CD4-positive, alpha-beta memory T cell (primary cell): ENCODE measurements at regions of chr12 and their contacts with region 1.

Region 1: DNA sequence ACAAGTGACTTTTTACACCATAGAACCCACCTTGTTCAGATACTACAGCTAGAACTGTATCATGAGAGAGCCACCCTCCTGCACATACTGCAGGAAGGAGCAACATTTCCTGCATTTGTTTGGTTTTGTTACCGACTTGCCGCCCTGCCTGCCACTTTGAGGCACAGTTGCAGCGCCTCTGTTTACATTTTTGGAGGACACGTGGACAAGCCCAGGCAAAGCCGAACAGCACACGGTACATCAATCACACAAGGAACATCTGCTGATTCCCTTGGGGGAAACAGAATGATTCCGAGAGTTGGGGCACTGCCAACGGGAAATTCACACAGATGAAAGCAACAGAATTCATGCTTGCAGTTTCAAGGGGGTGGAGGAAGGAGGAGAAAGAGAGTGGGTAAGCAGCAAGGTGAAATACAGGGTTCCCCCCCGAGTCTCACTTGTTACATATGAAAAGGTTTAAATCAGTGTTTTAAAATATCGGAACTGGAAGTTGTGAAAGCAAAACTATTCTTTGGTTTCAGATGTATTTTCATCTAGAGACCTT is 110.7 kb downstream of the BTG1 start:
- DNase-seq: peak; percentile 55 to 62 (median 59)
- H3K4me3 ChIP-seq: peak overlapping the region; percentile 24 to 44
- H3K4me3 Mint-ChIP-seq: peak overlapping the region; percentile 83 to 97 (median 91)
- H3K27ac ChIP-seq: peak overlapping the region; percentile 65
- H3K27ac Mint-ChIP-seq: peak overlapping the region; percentile 97 to 100 (median 98)
- H3K4me1 ChIP-seq: peaks cover 92% of the 10 kb centered on the region
- H3K4me1 Mint-ChIP-seq: peaks cover 66 to 97% (median 81%) of the 10 kb centered on the region in 4 donors
- H3K27me3 ChIP-seq: no peaks in the 10 kb centered on the region
- H3K27me3 Mint-ChIP-seq: no peaks in the 10 kb centered on the region

Region 2: DNA sequence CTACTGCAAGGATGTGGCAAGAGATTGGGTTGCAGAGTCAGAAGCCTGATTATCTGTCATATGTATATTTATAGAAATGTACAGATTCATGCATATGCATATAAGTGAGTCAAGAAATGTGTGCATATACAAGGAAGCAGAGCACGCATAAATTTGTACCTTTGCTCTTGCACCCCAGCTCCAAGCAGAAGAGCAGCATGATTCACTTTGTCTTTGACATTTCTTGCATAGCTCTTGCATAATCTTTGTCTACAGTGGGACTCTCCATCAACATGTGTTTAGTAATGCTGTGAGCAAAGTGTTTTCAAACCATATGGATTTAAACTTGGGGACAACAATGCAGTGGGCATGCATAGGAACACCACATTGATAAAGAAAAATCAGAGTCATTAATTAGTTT is 521.6 kb before region 1 on chr12:
- CTCF ChIA-PET with region 1: no interaction called
- POLR2A ChIA-PET with region 1: no interaction called
- intact Hi-C with region 1: no loop called
- DNase-seq: no peak
- H3K4me3 ChIP-seq: no peak overlapping the region
- H3K4me3 Mint-ChIP-seq: no peak overlapping the region
- H3K27ac ChIP-seq: no peak overlapping the region
- H3K27ac Mint-ChIP-seq: no peak overlapping the region
- H3K4me1 ChIP-seq: no peaks in the 10 kb centered on the region
- H3K4me1 Mint-ChIP-seq: no peaks in the 10 kb centered on the region
- H3K27me3 ChIP-seq: no peaks in the 10 kb centered on the region
- H3K27me3 Mint-ChIP-seq: peaks cover 6% of the 10 kb centered on the region in 2 donors

Region 3: DNA sequence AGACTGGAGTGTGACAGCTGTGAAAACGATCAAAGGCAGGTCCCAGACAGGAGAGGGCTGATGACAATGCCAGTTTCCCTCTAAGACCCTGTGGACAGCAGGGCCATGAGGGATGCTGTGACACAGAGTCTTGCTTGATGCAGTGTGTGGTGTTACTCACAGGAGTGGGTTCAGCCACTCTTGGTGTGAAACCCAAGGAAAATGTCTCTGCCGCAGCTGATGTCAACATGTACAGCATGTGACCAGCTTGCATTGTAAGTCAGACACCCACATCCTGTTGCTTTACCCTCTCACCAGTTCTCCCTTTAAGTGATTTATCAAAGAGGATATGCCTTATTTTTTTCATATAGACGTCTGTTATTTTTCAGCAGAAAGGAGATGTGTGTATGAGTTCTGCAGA is 157.9 kb before region 1 on chr12:
- CTCF ChIA-PET with region 1: interaction called, 4 read pairs
- POLR2A ChIA-PET with region 1: interaction called, 29 read pairs
- intact Hi-C with region 1: loop called (anchors 2 kb)
- DNase-seq: peak; percentile 87 to 98 (median 93)
- H3K4me3 ChIP-seq: peak overlapping the region; percentile 9 to 14
- H3K4me3 Mint-ChIP-seq: peak overlapping the region; percentile 73 to 86 (median 79)
- H3K27ac ChIP-seq: peak overlapping the region; percentile 93
- H3K27ac Mint-ChIP-seq: peak overlapping the region; percentile 99 to 100 (median 100)
- H3K4me1 ChIP-seq: peaks cover 76% of the 10 kb centered on the region
- H3K4me1 Mint-ChIP-seq: peaks cover 54 to 79% (median 64%) of the 10 kb centered on the region in 4 donors
- H3K27me3 ChIP-seq: no peaks in the 10 kb centered on the region
- H3K27me3 Mint-ChIP-seq: no peaks in the 10 kb centered on the region

Region 4: GRCh38 chr12:92010853-92011701 is 23.9 kb before region 1 on chr12:
- CTCF ChIA-PET with region 1: interaction called, 8 read pairs
- POLR2A ChIA-PET with region 1: interaction called, 16 read pairs
- intact Hi-C with region 1: no loop called
- DNase-seq: no peak
- H3K4me3 ChIP-seq: no peak overlapping the region
- H3K4me3 Mint-ChIP-seq: peak overlapping the region; percentile 36 to 90 (median 80)
- H3K27ac ChIP-seq: peak overlapping the region; percentile 32
- H3K27ac Mint-ChIP-seq: peak overlapping the region; percentile 22 to 93 (median 85)
- H3K4me1 ChIP-seq: peaks cover 23% of the 10 kb centered on the region
- H3K4me1 Mint-ChIP-seq: peaks cover 31 to 51% (median 37%) of the 10 kb centered on the region in 4 donors
- H3K27me3 ChIP-seq: no peaks in the 10 kb centered on the region
- H3K27me3 Mint-ChIP-seq: no peaks in the 10 kb centered on the region

Region 5: GRCh38 chr12:92049403-92049802 is 14.5 kb after region 1 on chr12:
- CTCF ChIA-PET with region 1: interaction called, 5 read pairs
- POLR2A ChIA-PET with region 1: interaction called, 68 read pairs
- intact Hi-C with region 1: loop called (anchors 1 kb)
- DNase-seq: peak in 1 of 5 donors; percentile 35
- H3K4me3 ChIP-seq: no peak overlapping the region
- H3K4me3 Mint-ChIP-seq: peak overlapping the region in 2 of 8 donors; percentile 49 to 51
- H3K27ac ChIP-seq: no peak overlapping the region
- H3K27ac Mint-ChIP-seq: peak overlapping the region in 2 of 7 donors; percentile 11 to 31
- H3K4me1 ChIP-seq: peaks cover 56% of the 10 kb centered on the region
- H3K4me1 Mint-ChIP-seq: peaks cover 36 to 82% (median 59%) of the 10 kb centered on the region in 4 donors
- H3K27me3 ChIP-seq: no peaks in the 10 kb centered on the region
- H3K27me3 Mint-ChIP-seq: no peaks in the 10 kb centered on the region

Region 6: DNA sequence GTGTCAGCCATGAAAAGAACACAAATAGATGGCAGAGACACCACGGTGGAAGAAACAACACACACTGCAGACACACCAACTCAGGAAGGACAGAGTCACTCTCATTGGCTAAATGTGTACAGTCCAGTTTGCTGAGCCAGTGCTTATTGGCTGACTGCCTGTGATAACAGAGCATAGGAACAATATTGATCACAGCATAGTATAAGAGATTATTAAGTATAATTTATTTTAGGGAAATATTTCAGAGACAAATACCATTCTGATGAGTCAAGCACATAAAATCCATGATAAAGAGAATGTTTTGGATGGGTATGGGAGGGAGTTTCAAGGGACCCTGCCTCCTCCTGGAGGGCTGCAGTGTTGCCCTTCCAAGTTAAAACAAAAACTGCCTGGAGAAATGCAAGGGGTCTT is 59.8 kb after region 1 on chr12:
- CTCF ChIA-PET with region 1: interaction called, 10 read pairs
- POLR2A ChIA-PET with region 1: no interaction called
- intact Hi-C with region 1: no loop called
- DNase-seq: no peak
- H3K4me3 ChIP-seq: no peak overlapping the region
- H3K4me3 Mint-ChIP-seq: peak overlapping the region in 1 of 8 donors; percentile 10
- H3K27ac ChIP-seq: no peak overlapping the region
- H3K27ac Mint-ChIP-seq: peak overlapping the region in 2 of 7 donors; percentile 17 to 20
- H3K4me1 ChIP-seq: peaks cover 21% of the 10 kb centered on the region
- H3K4me1 Mint-ChIP-seq: peaks cover 17 to 35% (median 27%) of the 10 kb centered on the region in 4 donors
- H3K27me3 ChIP-seq: no peaks in the 10 kb centered on the region
- H3K27me3 Mint-ChIP-seq: no peaks in the 10 kb centered on the region

Region 7: GRCh38 chr12:92136965-92137721 is 102.2 kb after region 1 on chr12:
- CTCF ChIA-PET with region 1: interaction called, 48 read pairs
- POLR2A ChIA-PET with region 1: interaction called, 525 read pairs
- intact Hi-C with region 1: loop called (anchors 1 kb)
- DNase-seq: no peak
- H3K4me3 ChIP-seq: peak overlapping the region; percentile 83 to 89
- H3K4me3 Mint-ChIP-seq: peak overlapping the region; percentile 87 to 100 (median 100)
- H3K27ac ChIP-seq: peak overlapping the region; percentile 86
- H3K27ac Mint-ChIP-seq: peak overlapping the region; percentile 83 to 100 (median 99)
- H3K4me1 ChIP-seq: peaks cover 52% of the 10 kb centered on the region
- H3K4me1 Mint-ChIP-seq: peaks cover 43 to 59% (median 49%) of the 10 kb centered on the region in 4 donors
- H3K27me3 ChIP-seq: no peaks in the 10 kb centered on the region
- H3K27me3 Mint-ChIP-seq: no peaks in the 10 kb centered on the region

Region 8: GRCh38 chr12:92408072-92408900 is 373.4 kb after region 1 on chr12:
- CTCF ChIA-PET with region 1: interaction called, 7 read pairs
- POLR2A ChIA-PET with region 1: interaction called, 6 read pairs
- intact Hi-C with region 1: loop called (anchors 5 kb)
- DNase-seq: peak in 3 of 5 donors; percentile 38 to 45 (median 45)
- H3K4me3 ChIP-seq: no peak overlapping the region
- H3K4me3 Mint-ChIP-seq: peak overlapping the region in 5 of 8 donors; percentile 2 to 80 (median 30)
- H3K27ac ChIP-seq: no peak overlapping the region
- H3K27ac Mint-ChIP-seq: peak overlapping the region in 6 of 7 donors; percentile 30 to 91 (median 77)
- H3K4me1 ChIP-seq: peaks cover 40% of the 10 kb centered on the region
- H3K4me1 Mint-ChIP-seq: peaks cover 38 to 73% (median 49%) of the 10 kb centered on the region in 4 donors
- H3K27me3 ChIP-seq: no peaks in the 10 kb centered on the region
- H3K27me3 Mint-ChIP-seq: no peaks in the 10 kb centered on the region